Sigmoid colon (tissue), 7 donors: ENCODE measurements at regions of chr15 and their contacts with region 1.

Region 1: DNA sequence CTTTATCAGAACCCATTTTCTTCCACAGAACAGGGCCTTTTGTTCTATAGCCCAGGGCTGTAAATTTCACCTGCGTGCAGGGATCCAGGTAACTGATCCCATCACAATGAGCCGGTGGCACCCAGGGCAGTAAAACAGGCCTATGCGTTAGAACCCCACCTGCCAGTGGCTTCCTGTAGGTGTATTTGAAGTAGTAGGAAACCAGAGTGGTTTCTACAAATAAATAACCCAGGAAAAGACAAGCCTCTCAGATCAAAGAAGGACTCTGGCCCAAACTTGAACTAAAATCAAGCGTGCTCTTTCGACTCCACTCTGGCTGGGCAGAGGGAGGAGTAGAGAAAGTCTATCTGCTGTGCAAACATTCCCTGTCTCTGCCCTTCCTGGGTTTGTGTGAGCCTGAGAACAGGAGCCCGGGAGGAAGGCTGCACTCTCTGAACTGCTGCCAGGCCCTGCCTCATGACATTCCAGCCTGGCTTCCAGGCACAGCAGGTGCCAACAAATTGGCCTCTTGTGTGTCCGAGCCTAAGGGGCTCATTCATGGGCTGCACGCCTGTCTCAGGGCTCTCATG is 77.7 kb downstream of the CEMIP start:
- DNase-seq: peak; percentile 82
- H3K4me3 ChIP-seq: no peak overlapping the region
- H3K27ac ChIP-seq: peak overlapping the region in 3 of 4 donors; percentile 5 to 64 (median 44)
- H3K4me1 ChIP-seq: peaks cover 0 to 46% (median 34%) of the 10 kb centered on the region in 4 donors
- H3K27me3 ChIP-seq: no peaks in the 10 kb centered on the region
- CTCF ChIP-seq: no peak
- EP300 ChIP-seq: no peak
- POLR2A ChIP-seq: no peak

Region 2: GRCh38 chr15:80911067-80911466 is 54.2 kb after region 1 on chr15:
- intact Hi-C with region 1: loop called (anchors 5 kb)
- DNase-seq: no peak
- H3K4me3 ChIP-seq: no peak overlapping the region
- H3K27ac ChIP-seq: no peak overlapping the region
- H3K4me1 ChIP-seq: peaks cover 0 to 34% (median 23%) of the 10 kb centered on the region in 4 donors
- H3K27me3 ChIP-seq: no peaks in the 10 kb centered on the region
- CTCF ChIP-seq: no peak
- EP300 ChIP-seq: no peak
- POLR2A ChIP-seq: no peak

Region 3: GRCh38 chr15:80934761-80935221 is 77.9 kb after region 1 on chr15:
- intact Hi-C with region 1: loop called (anchors 5 kb)
- DNase-seq: no peak
- H3K4me3 ChIP-seq: no peak overlapping the region
- H3K27ac ChIP-seq: peak overlapping the region in 3 of 4 donors; percentile 69 to 89 (median 76)
- H3K4me1 ChIP-seq: peaks cover 0 to 65% (median 56%) of the 10 kb centered on the region in 4 donors
- H3K27me3 ChIP-seq: no peaks in the 10 kb centered on the region
- CTCF ChIP-seq: no peak
- EP300 ChIP-seq: no peak
- POLR2A ChIP-seq: no peak

Region 4: GRCh38 chr15:80957556-80957955 is 100.7 kb after region 1 on chr15:
- intact Hi-C with region 1: no loop called
- DNase-seq: no peak
- H3K4me3 ChIP-seq: no peak overlapping the region
- H3K27ac ChIP-seq: no peak overlapping the region
- H3K4me1 ChIP-seq: no peaks in the 10 kb centered on the region
- H3K27me3 ChIP-seq: no peaks in the 10 kb centered on the region
- CTCF ChIP-seq: no peak
- EP300 ChIP-seq: no peak
- POLR2A ChIP-seq: no peak

Region 5: DNA sequence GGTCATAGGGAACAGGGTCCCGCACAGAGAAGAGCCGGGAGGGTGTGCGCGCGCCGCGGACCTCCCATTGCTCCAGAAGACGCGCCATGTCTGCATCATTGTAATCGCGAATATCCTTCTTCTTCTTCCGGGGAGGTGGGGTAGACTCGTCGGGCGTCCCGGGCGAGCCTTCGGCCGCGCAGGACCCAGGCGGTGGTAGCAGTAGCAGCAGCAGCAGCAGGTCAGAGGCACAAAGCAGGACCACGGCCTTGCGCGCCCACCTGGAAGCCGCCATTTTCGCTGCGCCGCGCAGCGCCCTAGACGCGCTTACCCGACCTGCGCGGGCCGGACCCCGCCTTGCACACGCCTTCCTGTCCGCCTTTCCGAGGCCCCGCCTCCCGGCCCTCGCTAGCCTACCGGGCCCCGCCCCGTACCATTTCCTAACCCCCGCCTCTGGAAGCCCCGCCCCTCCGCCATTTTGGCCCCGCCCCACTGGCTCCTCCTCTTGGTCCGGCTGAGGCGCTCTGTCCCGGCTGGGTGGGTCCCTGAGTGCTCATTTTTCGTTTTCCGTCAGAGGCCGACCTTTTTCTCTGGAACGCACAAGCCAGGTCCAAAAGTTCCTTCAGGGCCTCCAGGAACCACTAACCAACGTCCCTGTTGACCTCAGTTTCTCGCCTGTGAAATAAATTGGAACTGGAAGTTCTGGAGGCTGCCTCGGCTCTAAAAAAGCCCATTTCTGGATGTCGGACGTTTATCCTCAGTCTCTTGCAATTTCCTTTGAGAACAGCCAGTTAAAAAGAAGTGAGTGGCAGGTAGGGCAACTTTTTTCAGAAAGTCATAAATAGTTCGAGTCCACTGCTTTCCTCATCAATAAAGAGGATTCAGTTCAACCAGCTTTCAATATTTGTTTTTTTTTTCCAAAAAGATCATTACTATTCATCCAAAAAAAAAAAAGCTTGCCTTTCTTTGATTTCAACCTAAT is 132.9 kb after region 1 on chr15 and contains the start of gene MESD:
- intact Hi-C with region 1: no loop called
- DNase-seq: peak; percentile 99
- H3K4me3 ChIP-seq: peak within 1 kb of the TSS; percentile 69 to 92 (median 87)
- H3K27ac ChIP-seq: peak within 1 kb of the TSS; percentile 89 to 94 (median 92)
- H3K4me1 ChIP-seq: peaks cover 0 to 46% (median 34%) of the 10 kb centered on the region in 4 donors
- H3K27me3 ChIP-seq: no peaks in the 10 kb centered on the region
- CTCF ChIP-seq: no peak
- EP300 ChIP-seq: no peak
- POLR2A ChIP-seq: peak; percentile 72 to 73
- total RNA-seq, gene MESD: 11.7 to 20.8 (median 15.7) TPM